Activated T-helper 1 cell treated with anti-CD3 and anti-CD28 coated beads, Interleukin-12 subunit alpha, Interleukin-12 subunit beta, Interleukin-2, Interleukin-4 antibody, amounts not matched to agents 30 ng/mL and 10 ng/mL and 1 ng/mL, durations not matched to agents 14 hours and 24 hours and 36 hours (primary cell): ENCODE measurements at regions of chr9 and their contacts with region 1.

Region 1: GRCh38 chr9:33446946-33447798 is at the start of gene AQP3:
- DNase-seq: peak; percentile 72
- H3K4me3 Mint-ChIP-seq: peak within 1 kb of the TSS; percentile 93
- H3K27ac Mint-ChIP-seq: peak within 1 kb of the TSS; percentile 90
- H3K4me1 Mint-ChIP-seq: peaks cover 40% of the 10 kb centered on the region
- H3K27me3 Mint-ChIP-seq: no peaks in the 10 kb centered on the region
- total RNA-seq, gene AQP3: 3.4 and 6.1 TPM in 2 replicates

Region 2: DNA sequence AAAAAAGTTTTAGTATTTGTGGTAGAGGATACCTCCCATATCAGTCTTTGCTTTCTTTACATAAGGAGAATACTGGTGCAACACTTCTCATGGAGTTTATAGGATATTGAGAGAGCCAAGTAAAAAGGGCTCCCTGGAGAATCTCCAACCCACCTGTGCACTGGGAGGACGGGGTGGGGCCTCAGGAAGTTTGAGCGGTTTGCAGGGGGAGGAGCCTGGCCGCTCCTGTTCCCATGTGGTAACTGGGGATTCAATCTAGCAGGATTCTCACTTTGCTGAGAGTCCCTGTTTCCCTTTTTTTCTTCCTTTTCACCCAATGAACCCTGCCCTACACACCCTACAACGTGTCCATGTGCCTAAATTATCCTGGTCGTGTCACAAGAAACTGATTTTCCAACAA is 528.5 kb before region 1 on chr9:
- intact Hi-C with region 1: no loop called
- DNase-seq: no peak
- H3K4me3 Mint-ChIP-seq: no peak overlapping the region
- H3K27ac Mint-ChIP-seq: no peak overlapping the region
- H3K4me1 Mint-ChIP-seq: no peaks in the 10 kb centered on the region
- H3K27me3 Mint-ChIP-seq: peaks cover 2% of the 10 kb centered on the region

Region 3: DNA sequence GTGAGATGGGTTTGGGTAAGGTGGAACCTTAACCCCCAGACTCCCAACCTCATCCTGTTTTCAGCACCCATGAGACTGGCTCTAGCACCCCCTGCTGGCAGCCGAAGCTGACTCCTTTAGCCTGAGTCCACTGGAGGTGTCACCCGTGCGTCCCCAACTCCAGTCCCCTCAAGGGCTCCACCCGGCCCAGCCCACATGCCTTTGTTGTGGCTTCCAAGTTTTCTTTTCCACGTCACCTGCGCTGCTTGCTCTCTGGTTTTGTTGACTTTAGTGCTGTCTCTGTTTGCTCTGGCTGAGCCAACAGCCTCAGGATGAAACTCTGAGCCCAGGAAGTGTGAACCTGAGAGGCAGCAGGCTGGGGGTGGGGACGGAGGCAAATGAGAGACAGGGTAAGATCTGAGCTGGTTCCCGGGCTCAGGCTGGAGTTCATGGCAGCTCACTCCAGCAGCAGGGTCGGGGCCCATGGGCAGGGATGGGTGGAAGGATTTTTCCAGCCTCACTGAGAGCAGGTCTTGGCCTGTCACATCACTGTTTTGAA is 31.6 kb before region 1 on chr9:
- intact Hi-C with region 1: loop called (anchors 1 kb)
- DNase-seq: peak; percentile 91
- H3K4me3 Mint-ChIP-seq: peak overlapping the region; percentile 76
- H3K27ac Mint-ChIP-seq: peak overlapping the region; percentile 95
- H3K4me1 Mint-ChIP-seq: peaks cover 53% of the 10 kb centered on the region
- H3K27me3 Mint-ChIP-seq: peaks cover under 1% of the 10 kb centered on the region

Region 4: DNA sequence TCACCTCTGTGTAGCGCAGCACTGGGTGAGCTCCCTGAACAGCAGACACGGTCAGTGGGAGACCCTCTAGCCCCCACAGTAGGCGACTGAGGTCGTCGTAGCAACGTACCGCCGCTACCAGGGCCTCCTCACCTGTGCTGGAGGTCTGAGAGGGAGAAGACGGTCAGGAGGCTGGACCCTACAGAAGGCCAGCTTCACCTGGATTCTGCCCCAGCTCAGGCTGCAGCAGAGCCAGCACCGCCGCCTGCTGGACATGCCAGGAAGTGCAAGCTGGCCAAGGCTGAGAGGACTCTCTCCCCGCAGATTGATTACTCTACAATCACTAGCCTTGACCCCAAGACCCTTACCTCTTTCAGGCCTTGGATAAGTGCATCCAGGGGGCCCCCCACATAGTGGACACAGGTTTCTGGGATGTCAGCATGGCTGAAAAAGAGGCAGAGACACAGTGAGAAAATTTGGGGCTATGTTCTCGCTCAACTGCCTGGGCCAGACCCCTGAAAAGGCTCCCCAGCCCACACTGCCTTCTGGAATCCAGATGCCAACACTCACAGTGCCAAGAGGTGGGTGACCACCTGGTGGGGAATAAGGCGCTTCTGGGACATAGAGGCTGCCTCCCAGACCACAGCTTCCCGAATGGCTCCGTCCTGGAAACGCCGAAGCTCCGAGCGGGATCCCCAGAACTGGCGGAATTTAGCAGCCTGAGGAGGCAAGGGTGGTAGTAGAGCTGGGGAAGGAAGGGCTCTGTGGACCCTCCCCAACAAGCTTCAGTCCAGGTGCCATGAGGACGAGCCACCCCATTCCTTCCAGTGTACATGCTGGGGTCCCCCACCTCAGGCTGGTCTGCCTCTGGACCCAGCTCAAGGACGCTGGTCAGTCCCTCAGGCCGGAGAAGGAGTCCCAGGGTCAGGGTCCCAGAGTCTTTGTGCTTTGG is 19.7 kb after region 1 on chr9:
- intact Hi-C with region 1: loop called (anchors 1 kb)
- DNase-seq: peak; percentile 59
- H3K4me3 Mint-ChIP-seq: no peak overlapping the region
- H3K27ac Mint-ChIP-seq: no peak overlapping the region
- H3K4me1 Mint-ChIP-seq: peaks cover 8% of the 10 kb centered on the region
- H3K27me3 Mint-ChIP-seq: no peaks in the 10 kb centered on the region